ENCODE measurements at regions of chr10 and their contacts with region 1.

Region 1: DNA sequence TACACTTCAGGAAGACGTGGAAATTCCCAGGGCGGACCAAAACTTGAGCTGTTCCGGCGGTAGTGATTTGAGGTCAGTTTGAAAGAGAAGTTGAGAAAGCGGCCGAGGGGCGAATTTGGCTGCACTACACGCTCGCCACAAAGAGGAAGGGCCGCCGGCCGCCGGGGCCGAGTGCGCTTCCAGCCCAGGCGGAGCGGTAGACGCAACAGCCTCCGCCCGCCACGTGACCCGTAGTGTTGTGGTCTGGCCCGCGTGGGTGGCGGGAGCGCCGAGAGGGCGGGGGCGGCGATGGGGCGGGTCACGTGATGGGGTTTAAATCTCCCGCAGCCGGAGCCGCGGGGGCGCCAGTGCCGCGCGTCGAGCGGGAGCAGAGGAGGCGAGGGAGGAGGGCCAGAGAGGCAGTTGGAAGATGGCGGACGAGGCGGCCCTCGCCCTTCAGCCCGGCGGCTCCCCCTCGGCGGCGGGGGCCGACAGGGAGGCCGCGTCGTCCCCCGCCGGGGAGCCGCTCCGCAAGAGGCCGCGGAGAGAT is at the start of gene SIRT1:
- DNase-seq: peak; percentile 96 to 98
- ATAC-seq: peak; percentile 93 to 98 (median 97)
- H3K4me3 ChIP-seq: peak within 1 kb of the TSS; percentile 68 to 92 (median 80)
- H3K27ac ChIP-seq: peak within 1 kb of the TSS; percentile 84 to 99 (median 94)
- H3K4me1 ChIP-seq: peaks cover 0 to 42% (median 23%) of the 10 kb centered on the region in 9 donors
- H3K27me3 ChIP-seq: no peaks in the 10 kb centered on the region
- CTCF ChIP-seq: peak in 2 of 9 donors; percentile 4 to 22
- total RNA-seq, gene SIRT1: 9.9 to 18.0 (median 14.0) TPM

Region 2: GRCh38 chr10:67849331-67850011 is 34.9 kb before region 1 on chr10:
- intact Hi-C with region 1: loop called in 1 of 10 experiments (anchors 2 kb)
- DNase-seq: peak; percentile 98
- ATAC-seq: peak; percentile 94 to 100 (median 99)
- H3K4me3 ChIP-seq: peak overlapping the region; percentile 26 to 86 (median 70)
- H3K27ac ChIP-seq: peak overlapping the region; percentile 70 to 99 (median 93)
- H3K4me1 ChIP-seq: peaks cover 0 to 8% (median 6%) of the 10 kb centered on the region in 9 donors
- H3K27me3 ChIP-seq: no peaks in the 10 kb centered on the region
- CTCF ChIP-seq: peak in 1 of 9 donors; percentile 29

Region 3: GRCh38 chr10:68074775-68075549 is 190.6 kb after region 1 on chr10 and contains the start of gene HERC4:
- intact Hi-C with region 1: loop called in 3 of 10 experiments (anchors 5 to 10 kb)
- DNase-seq: peak; percentile 96
- ATAC-seq: peak; percentile 98 to 99 (median 99)
- H3K4me3 ChIP-seq: peak within 1 kb of the TSS; percentile 76 to 98 (median 94)
- H3K27ac ChIP-seq: peak within 1 kb of the TSS; percentile 94 to 99 (median 98)
- H3K4me1 ChIP-seq: peaks cover 2 to 50% (median 34%) of the 10 kb centered on the region in 9 donors
- H3K27me3 ChIP-seq: no peaks in the 10 kb centered on the region
- CTCF ChIP-seq: no peak
- total RNA-seq, gene HERC4: 23.3 to 42.1 (median 32.3) TPM

Region 4: GRCh38 chr10:68331455-68332258 is 447.3 kb after region 1 on chr10 and contains the start of gene HNRNPH3:
- intact Hi-C with region 1: loop called in 4 of 10 experiments (anchors 2 to 10 kb)
- DNase-seq: peak; percentile 99
- ATAC-seq: peak; percentile 92 to 97 (median 94)
- H3K4me3 ChIP-seq: peak within 1 kb of the TSS; percentile 79 to 96 (median 88)
- H3K27ac ChIP-seq: peak within 1 kb of the TSS; percentile 97 to 100 (median 99)
- H3K4me1 ChIP-seq: peaks cover 0 to 73% (median 42%) of the 10 kb centered on the region in 9 donors
- H3K27me3 ChIP-seq: no peaks in the 10 kb centered on the region
- CTCF ChIP-seq: no peak
- total RNA-seq, gene HNRNPH3: 81.8 to 130 (median 105) TPM